ENCODE measurements at regions of chr19 and their contacts with region 1.

Region 1: GRCh38 chr19:17336872-17337722 is at the start of gene GTPBP3:
- DNase-seq: peak; percentile 89 to 100 (median 98)

Region 2: DNA sequence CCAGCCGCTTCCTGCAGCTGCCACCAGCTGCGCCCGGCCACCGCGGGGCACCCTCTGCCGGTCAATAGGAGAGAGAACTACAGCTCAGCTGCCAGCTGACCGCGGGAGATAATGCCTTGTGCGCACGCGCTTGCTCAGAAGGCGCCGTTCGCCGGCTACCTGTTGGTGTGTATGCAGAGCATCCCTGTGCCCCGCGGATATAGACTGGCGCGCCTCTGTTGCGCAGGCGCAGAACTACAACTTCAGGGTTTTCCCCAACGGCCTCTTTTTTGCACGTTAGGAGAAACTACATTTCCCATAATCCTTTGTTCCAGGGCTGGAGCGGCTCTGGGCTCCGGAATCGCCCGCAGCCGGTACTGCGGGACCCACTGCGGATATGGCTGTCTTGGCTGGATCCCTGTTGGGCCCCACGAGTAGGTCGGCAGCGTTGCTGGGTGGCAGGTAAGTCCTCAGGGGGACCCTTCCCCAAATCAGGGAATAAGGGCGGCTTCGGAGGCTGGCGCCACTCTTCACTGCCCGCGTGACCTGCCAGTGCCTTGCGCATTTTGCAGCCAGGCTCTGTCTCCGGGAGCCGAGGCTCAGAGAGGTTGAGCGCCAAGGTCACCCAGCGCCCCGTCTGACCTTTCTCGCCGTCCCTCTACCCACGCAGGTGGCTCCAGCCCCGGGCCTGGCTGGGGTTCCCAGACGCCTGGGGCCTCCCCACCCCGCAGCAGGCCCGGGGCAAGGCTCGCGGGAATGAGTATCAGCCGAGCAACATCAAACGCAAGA is 31.4 kb before region 1 on chr19 and contains the start of gene MRPL34:
- intact Hi-C with region 1: loop called (anchors 1 kb)
- DNase-seq: peak; percentile 93 to 100 (median 96)

Region 3: DNA sequence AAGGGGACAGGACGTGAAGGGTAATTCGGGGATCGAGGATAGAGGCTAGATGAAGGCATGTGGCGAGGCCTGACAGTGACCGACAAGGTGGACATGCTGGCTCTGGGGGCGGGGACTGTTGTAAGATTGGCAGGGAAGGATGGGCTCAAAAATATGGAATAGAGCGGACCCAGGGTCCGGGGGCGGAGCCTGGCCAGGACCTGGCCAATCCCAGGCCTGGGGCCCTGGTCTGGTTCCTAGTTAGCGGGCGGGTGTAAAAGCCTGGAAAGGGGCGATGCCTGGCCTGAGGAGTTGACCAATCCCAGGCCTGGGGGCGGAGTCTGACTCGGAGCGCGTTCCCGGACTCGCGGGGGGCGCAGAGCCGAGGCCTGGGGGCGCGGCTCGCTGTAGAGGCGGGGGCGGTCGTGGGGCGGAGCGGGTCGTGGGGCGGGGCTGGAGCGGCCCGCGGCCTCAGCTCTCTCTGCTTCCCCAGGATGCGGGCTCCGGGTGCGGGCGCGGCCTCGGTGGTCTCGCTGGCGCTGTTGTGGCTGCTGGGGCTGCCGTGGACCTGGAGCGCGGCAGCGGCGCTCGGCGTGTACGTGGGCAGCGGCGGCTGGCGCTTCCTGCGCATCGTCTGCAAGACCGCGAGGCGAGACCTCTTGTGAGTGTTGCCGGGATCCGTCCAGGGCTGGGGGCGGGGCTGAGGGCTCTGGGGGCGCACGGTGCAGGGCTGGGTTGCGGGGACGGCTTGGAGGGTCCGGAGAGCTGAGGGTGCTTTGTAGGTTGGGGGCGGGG is 133.2 kb after region 1 on chr19 and contains the start of gene SLC27A1:
- intact Hi-C with region 1: loop called (anchors 10 kb)
- DNase-seq: peak; percentile 99 to 100 (median 100)

Measured in posterior cingulate gyrus (tissue), 11 donors.